ENCODE measurements at regions of chr18 and their contacts with region 1.

Region 1: DNA sequence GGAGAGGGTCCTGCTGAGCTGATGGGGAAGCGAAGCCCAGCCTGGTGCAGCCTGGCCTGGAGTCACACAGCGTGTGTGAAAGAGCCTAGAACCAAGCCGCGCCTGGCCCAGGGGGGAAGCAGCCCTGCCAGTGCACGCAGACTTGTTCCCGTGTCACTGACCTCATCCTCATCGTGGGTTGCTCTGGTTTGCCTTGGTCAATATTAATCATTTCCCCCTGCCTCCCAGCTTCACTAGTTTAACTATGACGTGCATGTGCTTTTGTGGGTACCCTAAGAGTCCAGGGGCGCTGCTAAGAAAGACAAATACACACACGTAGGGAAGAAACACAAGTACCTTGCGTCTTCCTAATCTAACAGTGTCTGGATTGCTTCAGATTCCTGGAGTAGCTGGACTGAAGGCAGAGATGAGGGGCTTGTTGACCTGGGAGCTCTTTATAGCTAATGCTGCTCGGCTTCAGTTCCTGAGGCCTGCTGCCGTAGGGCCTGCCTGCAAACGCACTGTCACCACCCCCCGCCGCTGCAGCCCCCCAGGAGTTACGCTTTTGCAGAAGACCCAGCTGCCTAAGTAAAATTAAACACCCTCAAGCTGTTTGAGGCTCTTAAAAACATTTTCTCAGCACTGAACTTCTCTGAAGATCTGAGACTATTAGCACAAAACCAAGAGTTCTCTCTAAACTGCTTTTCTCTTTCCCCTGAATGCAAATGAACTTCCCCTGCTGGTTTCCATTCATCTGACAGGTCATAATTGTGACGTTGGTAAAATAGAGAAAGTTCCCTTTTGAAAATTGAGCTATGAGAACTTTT is 159.2 kb downstream of the FAM210A start:
- DNase-seq: peak; percentile 58
- ATAC-seq: peak; percentile 50
- H3K4me3 Mint-ChIP-seq: peak overlapping the region; percentile 73
- H3K27ac Mint-ChIP-seq: peak overlapping the region; percentile 96
- H3K4me1 Mint-ChIP-seq: peaks cover 87% of the 10 kb centered on the region
- H3K27me3 Mint-ChIP-seq: no peaks in the 10 kb centered on the region

Region 2: GRCh38 chr18:13611601-13612195 is 44.6 kb after region 1 on chr18:
- CTCF ChIA-PET with region 1: interaction called, 29 read pairs
- POLR2A ChIA-PET with region 1: interaction called, 32 read pairs
- DNase-seq: peak; percentile 44
- ATAC-seq: peak; percentile 22
- H3K4me3 Mint-ChIP-seq: peak overlapping the region; percentile 84
- H3K27ac Mint-ChIP-seq: peak overlapping the region; percentile 99
- H3K4me1 Mint-ChIP-seq: peaks cover 92% of the 10 kb centered on the region
- H3K27me3 Mint-ChIP-seq: no peaks in the 10 kb centered on the region